Heart left ventricle (tissue), 16 donors: ENCODE measurements at regions of chr16 and their contacts with region 1.

Region 1: DNA sequence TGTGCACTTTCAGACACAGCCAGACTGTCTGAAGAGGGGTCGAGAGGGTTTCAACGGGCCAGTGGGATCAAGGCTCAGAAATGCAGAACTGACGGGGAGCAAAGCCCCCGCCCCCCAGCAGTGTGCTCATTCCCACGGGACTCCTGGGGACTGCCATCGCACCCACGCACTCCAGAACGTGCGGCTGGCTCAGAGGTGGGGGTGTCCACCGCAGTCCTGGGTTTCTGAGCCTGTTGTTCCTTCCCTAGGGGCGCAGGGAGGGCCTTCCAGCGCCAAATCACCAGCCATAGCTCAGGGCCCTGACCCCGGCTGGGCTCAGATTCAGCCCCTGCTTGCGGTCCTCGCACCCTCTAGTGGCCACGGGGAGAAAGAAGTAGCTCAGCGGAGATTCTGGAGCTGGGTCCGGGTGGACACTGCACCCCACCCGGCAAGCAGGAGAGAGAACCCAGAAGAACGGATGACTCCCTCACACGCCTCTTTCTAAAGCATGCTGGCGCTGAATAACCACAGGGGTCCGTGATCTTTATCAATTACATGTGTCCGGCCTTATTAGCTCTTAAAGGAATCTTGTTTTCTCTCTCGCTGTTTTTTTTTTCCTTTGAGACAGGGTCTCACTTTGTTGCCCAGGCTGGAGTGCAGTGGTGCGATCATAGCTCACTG is 45.0 kb upstream of the USP7 start:
- DNase-seq: peak; percentile 71 to 82 (median 77)
- ATAC-seq: peak; percentile 80 to 96 (median 93)
- H3K4me3 ChIP-seq: peak overlapping the region in 11 of 12 donors; percentile 15 to 51 (median 36)
- H3K27ac ChIP-seq: no peak overlapping the region
- H3K4me1 ChIP-seq: peaks cover 0 to 14% (median 6%) of the 10 kb centered on the region in 12 donors
- H3K27me3 ChIP-seq: peaks cover 0 to 7% (median 0%) of the 10 kb centered on the region in 9 donors
- CTCF ChIP-seq: peak; percentile 74 to 90 (median 82)
- POLR2A ChIP-seq: no peak

Region 2: GRCh38 chr16:8572919-8573724 is 435.6 kb before region 1 on chr16:
- intact Hi-C with region 1: loop called in 3 of 10 experiments (anchors 5 to 10 kb)
- DNase-seq: no peak
- ATAC-seq: no peak
- H3K4me3 ChIP-seq: no peak overlapping the region
- H3K27ac ChIP-seq: no peak overlapping the region
- H3K4me1 ChIP-seq: peaks cover 0 to 8% (median 0%) of the 10 kb centered on the region in 12 donors
- H3K27me3 ChIP-seq: peaks cover 0 to 20% (median 8%) of the 10 kb centered on the region in 9 donors
- CTCF ChIP-seq: peak in 10 of 12 donors; percentile 7 to 48 (median 34)
- POLR2A ChIP-seq: no peak

Region 3: DNA sequence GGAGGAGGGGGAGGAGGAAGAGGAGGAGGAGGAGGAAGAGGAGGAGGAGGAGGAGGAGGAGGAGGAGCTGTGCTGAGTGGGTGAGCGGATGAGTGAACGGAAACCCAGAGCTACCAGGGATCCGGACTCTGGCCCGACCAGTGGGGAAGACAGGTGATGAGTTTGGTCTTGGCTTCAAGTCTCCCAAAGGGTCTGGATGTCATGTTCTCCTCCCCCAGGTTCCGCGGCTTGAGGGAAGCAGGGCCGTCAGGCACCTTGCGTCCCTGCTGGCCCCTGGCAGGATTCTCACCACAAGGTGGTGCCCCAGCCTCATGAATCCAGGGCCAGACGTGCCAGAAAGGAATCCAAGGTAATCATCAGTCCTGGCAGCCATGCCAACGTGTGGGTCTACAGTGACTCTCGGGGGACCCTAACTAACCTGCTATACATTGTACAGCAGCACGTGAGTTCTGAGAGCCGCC is 347.9 kb before region 1 on chr16:
- intact Hi-C with region 1: loop called in 5 of 10 experiments (anchors 5 to 10 kb)
- DNase-seq: peak in 4 of 5 donors; percentile 25 to 66 (median 45)
- ATAC-seq: peak in 3 of 4 donors; percentile 85 to 89 (median 87)
- H3K4me3 ChIP-seq: no peak overlapping the region
- H3K27ac ChIP-seq: no peak overlapping the region
- H3K4me1 ChIP-seq: no peaks in the 10 kb centered on the region
- H3K27me3 ChIP-seq: no peaks in the 10 kb centered on the region
- CTCF ChIP-seq: peak; percentile 38 to 69 (median 59)
- POLR2A ChIP-seq: no peak

Region 4: GRCh38 chr16:8928467-8928957 is 80.2 kb before region 1 on chr16:
- intact Hi-C with region 1: loop called in 1 of 10 experiments (anchors 10 kb)
- DNase-seq: no peak
- ATAC-seq: peak in 3 of 4 donors; percentile 43 to 56 (median 45)
- H3K4me3 ChIP-seq: no peak overlapping the region
- H3K27ac ChIP-seq: no peak overlapping the region
- H3K4me1 ChIP-seq: peaks cover 0 to 37% (median 18%) of the 10 kb centered on the region in 12 donors
- H3K27me3 ChIP-seq: no peaks in the 10 kb centered on the region
- CTCF ChIP-seq: no peak
- POLR2A ChIP-seq: no peak

Region 5: DNA sequence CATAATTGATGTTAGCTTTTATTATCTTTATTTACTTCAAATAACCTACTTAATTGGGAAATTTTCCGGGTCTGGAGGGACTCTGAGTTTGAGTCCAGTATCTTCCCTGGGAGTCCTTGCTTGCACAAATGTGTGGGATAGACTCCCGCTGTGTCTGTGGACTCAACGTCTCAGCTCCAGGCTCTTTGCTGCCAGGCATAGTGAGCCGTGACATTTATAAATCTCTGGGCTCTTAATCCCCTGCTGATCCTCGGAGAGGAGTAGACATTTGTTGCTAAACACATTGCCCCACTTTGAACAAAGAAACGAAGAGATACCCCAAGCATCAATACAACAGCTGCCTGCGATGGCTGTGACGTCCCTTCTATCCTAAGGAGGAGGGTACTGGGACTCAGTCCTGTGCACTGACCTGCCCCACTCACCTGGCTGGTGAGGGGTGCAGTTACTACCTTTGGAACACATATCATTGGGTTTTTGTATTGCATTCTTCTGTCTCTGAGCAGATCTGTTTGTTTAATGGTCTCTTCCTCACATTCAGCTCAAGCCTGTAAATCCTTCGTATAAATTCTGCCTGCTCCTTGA is 399.7 kb after region 1 on chr16:
- intact Hi-C with region 1: no loop called
- DNase-seq: no peak
- ATAC-seq: no peak
- H3K4me3 ChIP-seq: no peak overlapping the region
- H3K27ac ChIP-seq: no peak overlapping the region
- H3K4me1 ChIP-seq: peaks cover 0 to 5% (median 0%) of the 10 kb centered on the region in 12 donors
- H3K27me3 ChIP-seq: no peaks in the 10 kb centered on the region
- CTCF ChIP-seq: no peak
- POLR2A ChIP-seq: no peak